ENCODE measurements at regions of chr10 and their contacts with region 1.

Region 1: GRCh38 chr10:73991884-73992245 is 6.1 kb upstream of the VCL start:
- DNase-seq: peak; percentile 79
- H3K4me3 Mint-ChIP-seq: no peak overlapping the region
- H3K27ac Mint-ChIP-seq: peak overlapping the region; percentile 66
- H3K4me1 Mint-ChIP-seq: peaks cover 44% of the 10 kb centered on the region
- H3K27me3 Mint-ChIP-seq: peaks cover 2% of the 10 kb centered on the region

Region 2: GRCh38 chr10:73974309-73974946 is 17.4 kb before region 1 on chr10:
- intact Hi-C with region 1: loop called (anchors 2 kb)
- DNase-seq: no peak
- H3K4me3 Mint-ChIP-seq: peak overlapping the region; percentile 6
- H3K27ac Mint-ChIP-seq: no peak overlapping the region
- H3K4me1 Mint-ChIP-seq: peaks cover 14% of the 10 kb centered on the region
- H3K27me3 Mint-ChIP-seq: peaks cover 19% of the 10 kb centered on the region

Region 3: GRCh38 chr10:74058658-74059057 is 66.8 kb after region 1 on chr10:
- intact Hi-C with region 1: loop called (anchors 1 kb)
- DNase-seq: no peak
- H3K4me3 Mint-ChIP-seq: no peak overlapping the region
- H3K27ac Mint-ChIP-seq: peak overlapping the region; percentile 18
- H3K4me1 Mint-ChIP-seq: peaks cover 45% of the 10 kb centered on the region
- H3K27me3 Mint-ChIP-seq: peaks cover 4% of the 10 kb centered on the region

Region 4: GRCh38 chr10:74081192-74081803 is 89.4 kb after region 1 on chr10:
- intact Hi-C with region 1: loop called (anchors 1 kb)
- DNase-seq: peak; percentile 12
- H3K4me3 Mint-ChIP-seq: no peak overlapping the region
- H3K27ac Mint-ChIP-seq: peak overlapping the region; percentile 0
- H3K4me1 Mint-ChIP-seq: peaks cover 48% of the 10 kb centered on the region
- H3K27me3 Mint-ChIP-seq: no peaks in the 10 kb centered on the region